Naive thymus-derived CD4-positive, alpha-beta T cell (primary cell): ENCODE measurements at regions of chr16 and their contacts with region 1.

Region 1: DNA sequence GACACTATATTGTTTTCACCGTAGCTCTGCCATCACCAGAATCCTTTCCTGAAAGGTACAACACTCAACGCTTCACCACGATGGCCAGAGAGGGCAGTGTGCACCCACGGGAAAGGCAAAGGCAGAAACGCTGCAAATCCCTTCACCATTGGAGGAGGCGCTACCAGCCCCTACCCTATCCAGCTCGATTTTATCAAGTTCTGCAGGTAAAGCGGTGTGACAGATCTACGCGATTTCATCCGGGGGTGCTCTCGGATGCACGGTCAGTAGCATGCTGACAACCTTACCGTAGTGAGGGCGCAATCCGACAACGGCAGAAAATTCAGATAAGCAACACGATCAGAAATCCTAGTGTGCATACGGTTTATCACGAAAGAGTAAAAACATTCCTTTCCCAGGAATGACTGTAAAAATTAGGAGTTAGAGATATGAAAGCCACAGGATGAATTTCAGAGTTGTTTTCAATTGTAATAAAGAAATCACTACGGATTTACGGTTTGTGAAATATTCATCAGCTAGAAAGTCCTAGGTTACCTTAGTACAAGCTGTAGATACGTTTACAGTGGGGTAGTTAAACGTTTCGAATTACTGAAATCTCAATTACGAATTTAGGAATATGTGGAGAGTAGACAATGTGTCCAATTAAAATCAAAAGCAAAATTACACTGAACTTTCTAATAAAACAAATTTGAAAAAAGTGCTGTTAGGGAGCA is 1.8 kb downstream of the NETO2 start:
- DNase-seq: peak; percentile 53 to 83 (median 75)
- ATAC-seq: peak; percentile 86
- H3K4me3 ChIP-seq: peak overlapping the region; percentile 30
- H3K4me3 Mint-ChIP-seq: peak overlapping the region; percentile 72 to 89 (median 84)
- H3K27ac ChIP-seq: no peak overlapping the region
- H3K27ac Mint-ChIP-seq: peak overlapping the region in 2 of 9 donors; percentile 14 to 77
- H3K4me1 ChIP-seq: peaks cover 10 to 15% of the 10 kb centered on the region in 2 donors
- H3K4me1 Mint-ChIP-seq: peaks cover 12 to 29% (median 17%) of the 10 kb centered on the region in 7 donors
- H3K27me3 ChIP-seq: peaks cover 0 to 12% of the 10 kb centered on the region in 2 donors
- H3K27me3 Mint-ChIP-seq: peaks cover 22 to 37% (median 34%) of the 10 kb centered on the region in 5 donors

Region 2: GRCh38 chr16:46947900-46948547 is 193.9 kb before region 1 on chr16:
- CTCF ChIA-PET with region 1: interaction called, 4 read pairs
- POLR2A ChIA-PET with region 1: no interaction called
- intact Hi-C with region 1: loop called (anchors 5 kb)
- DNase-seq: peak in 7 of 9 donors; percentile 11 to 49 (median 42)
- ATAC-seq: peak; percentile 89
- H3K4me3 ChIP-seq: no peak overlapping the region
- H3K4me3 Mint-ChIP-seq: no peak overlapping the region
- H3K27ac ChIP-seq: no peak overlapping the region
- H3K27ac Mint-ChIP-seq: no peak overlapping the region
- H3K4me1 ChIP-seq: no peaks in the 10 kb centered on the region
- H3K4me1 Mint-ChIP-seq: peaks cover 0 to 13% (median under 1%) of the 10 kb centered on the region in 7 donors
- H3K27me3 ChIP-seq: no peaks in the 10 kb centered on the region
- H3K27me3 Mint-ChIP-seq: no peaks in the 10 kb centered on the region

Region 3: GRCh38 chr16:47096297-47096696 is 45.6 kb before region 1 on chr16:
- CTCF ChIA-PET with region 1: no interaction called
- POLR2A ChIA-PET with region 1: no interaction called
- intact Hi-C with region 1: no loop called
- DNase-seq: no peak
- ATAC-seq: no peak
- H3K4me3 ChIP-seq: no peak overlapping the region
- H3K4me3 Mint-ChIP-seq: no peak overlapping the region
- H3K27ac ChIP-seq: no peak overlapping the region
- H3K27ac Mint-ChIP-seq: no peak overlapping the region
- H3K4me1 ChIP-seq: no peaks in the 10 kb centered on the region
- H3K4me1 Mint-ChIP-seq: peaks cover 0 to 3% (median 0%) of the 10 kb centered on the region in 7 donors
- H3K27me3 ChIP-seq: no peaks in the 10 kb centered on the region
- H3K27me3 Mint-ChIP-seq: peaks cover 0 to 36% (median 10%) of the 10 kb centered on the region in 5 donors

Region 4: DNA sequence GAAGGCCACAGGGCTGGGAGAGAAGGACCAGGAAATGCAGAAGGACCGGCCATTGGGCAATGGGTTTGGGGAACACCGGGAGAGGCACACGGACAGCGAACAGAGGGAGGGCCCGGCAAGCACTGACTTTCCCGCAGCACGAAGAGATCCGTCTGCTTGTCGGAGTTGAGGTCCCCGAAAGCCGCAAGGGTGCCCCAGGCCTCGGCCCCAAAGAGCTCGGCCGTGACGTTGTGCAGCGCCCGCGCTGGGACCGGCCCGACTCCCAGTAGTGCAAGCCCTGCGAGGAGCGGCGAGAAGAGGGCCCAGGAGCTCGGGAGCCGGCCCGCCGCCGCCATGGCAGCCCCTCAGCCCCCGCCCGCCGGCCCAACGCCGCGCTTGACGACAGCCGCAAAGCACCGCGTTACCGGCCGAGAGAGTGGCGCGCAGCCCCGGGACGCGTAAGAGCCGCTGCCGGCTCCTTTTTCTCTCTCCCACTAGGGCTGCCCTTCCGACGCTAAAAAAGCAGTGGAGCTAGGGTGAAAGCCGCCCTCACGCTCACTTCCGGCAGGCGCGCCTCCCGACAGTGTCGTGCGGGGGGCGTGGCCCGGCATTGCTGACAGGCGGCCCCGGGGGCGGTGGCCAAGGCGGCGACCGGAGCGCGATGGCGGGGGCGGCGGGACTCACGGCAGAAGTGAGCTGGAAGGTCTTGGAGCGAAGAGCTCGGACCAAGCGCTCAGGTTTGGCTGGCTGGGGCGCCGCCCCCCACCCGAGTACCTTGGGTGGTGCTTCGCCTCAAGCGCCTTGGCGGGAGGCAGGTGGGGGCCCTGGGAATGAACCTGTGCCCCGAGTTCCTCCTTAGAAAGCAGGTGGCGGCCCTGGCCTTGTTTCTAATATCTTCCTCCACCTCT is 319.0 kb after region 1 on chr16 and contains the starts of genes ITFG1 and PHKB:
- CTCF ChIA-PET with region 1: no interaction called
- POLR2A ChIA-PET with region 1: no interaction called
- intact Hi-C with region 1: loop called (anchors 1 to 2 kb)
- DNase-seq: peak; percentile 94 to 98 (median 97)
- ATAC-seq: peak; percentile 97
- H3K4me3 ChIP-seq: peak within 1 kb of the TSS; percentile 94
- H3K4me3 Mint-ChIP-seq: peak within 1 kb of the TSS; percentile 91 to 100 (median 96)
- H3K27ac ChIP-seq: peak within 1 kb of the TSS; percentile 95
- H3K27ac Mint-ChIP-seq: peak within 1 kb of the TSS; percentile 91 to 99 (median 96)
- H3K4me1 ChIP-seq: peaks cover 10 to 21% of the 10 kb centered on the region in 2 donors
- H3K4me1 Mint-ChIP-seq: peaks cover 45 to 79% (median 73%) of the 10 kb centered on the region in 7 donors
- H3K27me3 ChIP-seq: no peaks in the 10 kb centered on the region
- H3K27me3 Mint-ChIP-seq: no peaks in the 10 kb centered on the region
- total RNA-seq, gene ITFG1: 21.7 to 34.3 (median 29.8) TPM
- total RNA-seq, gene PHKB: 48.5 to 82.9 (median 50.7) TPM

Region 5: GRCh38 chr16:47779201-47780016 is 637.5 kb after region 1 on chr16:
- CTCF ChIA-PET with region 1: no interaction called
- POLR2A ChIA-PET with region 1: no interaction called
- intact Hi-C with region 1: loop called in 1 of 2 experiments (anchors 5 kb)
- DNase-seq: peak in 3 of 9 donors; percentile 2 to 40 (median 18)
- ATAC-seq: peak; percentile 34
- H3K4me3 ChIP-seq: peak overlapping the region; percentile 62
- H3K4me3 Mint-ChIP-seq: peak overlapping the region; percentile 73 to 91 (median 86)
- H3K27ac ChIP-seq: peak overlapping the region; percentile 50
- H3K27ac Mint-ChIP-seq: peak overlapping the region; percentile 24 to 89 (median 76)
- H3K4me1 ChIP-seq: peaks cover 0 to 3% of the 10 kb centered on the region in 2 donors
- H3K4me1 Mint-ChIP-seq: peaks cover 8 to 16% (median 14%) of the 10 kb centered on the region in 7 donors
- H3K27me3 ChIP-seq: no peaks in the 10 kb centered on the region
- H3K27me3 Mint-ChIP-seq: peaks cover 3 to 7% (median 6%) of the 10 kb centered on the region in 5 donors

Region 6: GRCh38 chr16:48164907-48165726 is 1023.2 kb after region 1 on chr16:
- CTCF ChIA-PET with region 1: interaction called, 10 read pairs
- POLR2A ChIA-PET with region 1: no interaction called
- intact Hi-C with region 1: loop called (anchors 2 kb)
- DNase-seq: peak; percentile 20 to 71 (median 45)
- ATAC-seq: peak; percentile 87
- H3K4me3 ChIP-seq: no peak overlapping the region
- H3K4me3 Mint-ChIP-seq: peak overlapping the region in 1 of 10 donors; percentile 32
- H3K27ac ChIP-seq: no peak overlapping the region
- H3K27ac Mint-ChIP-seq: peak overlapping the region in 2 of 9 donors; percentile 50 to 88
- H3K4me1 ChIP-seq: no peaks in the 10 kb centered on the region
- H3K4me1 Mint-ChIP-seq: peaks cover 0 to 8% (median 4%) of the 10 kb centered on the region in 7 donors
- H3K27me3 ChIP-seq: no peaks in the 10 kb centered on the region
- H3K27me3 Mint-ChIP-seq: peaks cover 4 to 8% (median 4%) of the 10 kb centered on the region in 5 donors

Region 7: GRCh38 chr16:48609652-48610029 is 1467.7 kb after region 1 on chr16:
- CTCF ChIA-PET with region 1: no interaction called
- POLR2A ChIA-PET with region 1: no interaction called
- intact Hi-C with region 1: loop called in 1 of 2 experiments (anchors 5 kb)
- DNase-seq: no peak
- ATAC-seq: peak; percentile 39
- H3K4me3 ChIP-seq: peak overlapping the region; percentile 66
- H3K4me3 Mint-ChIP-seq: peak overlapping the region in 4 of 10 donors; percentile 24 to 95 (median 56)
- H3K27ac ChIP-seq: peak overlapping the region; percentile 94
- H3K27ac Mint-ChIP-seq: peak overlapping the region in 8 of 9 donors; percentile 88 to 99 (median 94)
- H3K4me1 ChIP-seq: peaks cover 63 to 76% of the 10 kb centered on the region in 2 donors
- H3K4me1 Mint-ChIP-seq: peaks cover 24 to 50% (median 43%) of the 10 kb centered on the region in 7 donors
- H3K27me3 ChIP-seq: no peaks in the 10 kb centered on the region
- H3K27me3 Mint-ChIP-seq: no peaks in the 10 kb centered on the region